H1 (cell line): ENCODE measurements at regions of chr22 and their contacts with region 1.

Region 1: DNA sequence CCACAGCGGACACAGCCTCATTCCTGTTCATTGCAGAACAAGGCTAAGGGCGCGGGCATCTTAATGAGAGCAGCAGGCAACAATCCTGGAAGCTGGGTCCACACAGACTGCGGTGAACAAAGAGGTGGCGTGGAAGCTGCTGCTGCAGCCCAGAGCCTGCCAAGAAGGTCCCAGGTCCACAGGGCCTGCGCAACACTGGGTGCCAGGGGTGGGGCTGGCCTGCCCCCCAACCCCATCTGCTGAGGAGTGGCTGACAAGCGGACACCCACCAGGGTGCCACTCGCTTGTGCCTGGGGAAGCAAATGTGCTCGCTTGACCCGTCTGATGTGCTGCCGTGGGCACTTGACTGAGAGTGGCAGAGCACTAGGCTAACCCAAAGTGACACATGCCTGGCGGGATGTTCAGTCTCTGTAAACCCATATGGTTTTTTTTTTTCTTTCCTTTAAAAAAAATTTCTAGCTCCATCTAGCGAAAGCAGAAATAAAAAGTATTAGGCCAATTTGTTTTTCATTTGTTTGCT is 83.2 kb upstream of the PITPNB start:
- DNase-seq: no peak
- H3K4me3 ChIP-seq: no peak overlapping the region
- H3K27ac ChIP-seq: no peak overlapping the region
- H3K4me1 ChIP-seq: no peaks in the 10 kb centered on the region
- H3K27me3 ChIP-seq: no peaks in the 10 kb centered on the region
- CTCF ChIP-seq: no peak
- EP300 ChIP-seq: no peak
- POLR2A ChIP-seq: no peak
- RAD21 ChIP-seq: no peak

Region 2: DNA sequence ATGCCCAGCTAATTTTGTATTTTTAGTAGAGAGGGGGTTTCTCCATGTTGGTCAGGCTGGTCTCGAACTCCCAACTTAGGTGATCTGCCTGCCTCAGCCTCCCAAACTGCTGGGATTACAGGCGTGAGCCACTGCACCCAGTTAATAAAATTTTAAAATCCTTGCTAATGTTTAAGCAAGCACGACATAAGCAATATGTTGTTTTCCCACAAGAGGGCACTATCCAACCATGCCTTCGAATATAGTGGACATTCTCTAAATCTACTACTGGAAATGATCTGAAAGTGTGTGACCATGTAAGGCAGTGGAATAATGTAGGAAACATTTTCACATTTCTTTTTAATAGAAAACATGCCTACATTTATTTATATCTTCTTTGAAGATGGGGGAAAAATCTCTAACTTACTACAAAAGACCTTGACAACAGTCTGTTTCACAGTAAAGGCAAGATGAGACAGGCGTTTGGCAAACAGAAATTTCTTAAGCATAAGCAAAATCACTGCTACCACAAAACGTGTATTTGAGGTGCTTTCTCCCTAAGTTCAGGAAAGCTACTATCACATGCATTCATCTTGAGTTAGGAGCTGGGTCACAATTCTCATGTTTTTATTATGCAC is 121.4 kb before region 1 on chr22:
- CTCF ChIA-PET with region 1: interaction called, 84 read pairs
- POLR2A ChIA-PET with region 1: interaction called, 3 read pairs
- DNase-seq: no peak
- H3K4me3 ChIP-seq: no peak overlapping the region
- H3K27ac ChIP-seq: no peak overlapping the region
- H3K4me1 ChIP-seq: peaks cover 7 to 12% (median 9%) of the 10 kb centered on the region in 4 experiments
- H3K27me3 ChIP-seq: no peaks in the 10 kb centered on the region
- CTCF ChIP-seq: peak in 2 of 3 experiments; percentile 51 to 71; a peak in 2 of 4 replicates
- EP300 ChIP-seq: no peak
- POLR2A ChIP-seq: no peak
- RAD21 ChIP-seq: peak; percentile 77 to 80

Region 3: DNA sequence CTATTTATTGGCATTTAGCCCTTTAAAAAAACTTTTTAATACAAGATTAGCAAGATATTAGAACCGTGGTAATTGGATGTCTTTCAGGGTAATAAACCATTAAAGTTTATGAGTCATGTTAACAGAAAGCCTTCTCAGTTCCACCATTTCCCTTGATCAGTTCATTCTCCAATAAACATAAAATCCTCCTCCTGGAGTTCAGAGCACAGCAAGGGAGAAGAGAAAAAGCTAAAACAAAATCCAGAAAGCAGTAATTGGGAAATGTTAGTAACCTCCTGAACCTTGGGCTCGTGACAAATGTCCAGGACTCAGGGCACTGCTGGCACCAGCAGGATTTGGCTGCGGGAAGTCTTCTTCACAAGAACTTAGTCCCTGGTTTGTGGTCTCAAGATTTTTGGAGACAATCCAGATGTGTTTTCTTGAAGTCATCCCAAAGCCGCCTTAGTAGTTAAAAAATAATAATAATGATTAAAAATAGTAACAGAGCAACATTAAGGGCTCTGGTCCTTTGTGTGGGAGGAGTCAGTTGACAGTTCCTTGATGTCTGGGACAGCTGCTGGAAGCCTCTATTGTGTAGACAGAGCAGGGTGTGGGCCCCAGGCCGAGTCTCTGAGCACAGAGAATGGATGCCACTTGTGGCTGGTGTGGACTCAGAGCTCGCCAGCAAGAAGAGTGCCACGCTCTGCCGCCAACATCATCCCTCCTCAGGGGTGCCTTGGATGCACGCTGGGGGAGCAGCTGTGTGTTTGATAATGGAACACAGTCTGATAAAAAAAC is 39.8 kb before region 1 on chr22:
- CTCF ChIA-PET with region 1: no interaction called
- POLR2A ChIA-PET with region 1: no interaction called
- DNase-seq: no peak
- H3K4me3 ChIP-seq: no peak overlapping the region
- H3K27ac ChIP-seq: no peak overlapping the region
- H3K4me1 ChIP-seq: peaks cover 0 to 4% (median 1%) of the 10 kb centered on the region in 4 experiments; a peak in 2 of 7 replicates
- H3K27me3 ChIP-seq: no peaks in the 10 kb centered on the region
- CTCF ChIP-seq: no peak
- EP300 ChIP-seq: no peak
- POLR2A ChIP-seq: no peak
- RAD21 ChIP-seq: no peak

Region 4: GRCh38 chr22:27980424-27981148 is 21.7 kb before region 1 on chr22:
- CTCF ChIA-PET with region 1: interaction called, 10 read pairs
- POLR2A ChIA-PET with region 1: interaction called, 4 read pairs
- DNase-seq: peak in 1 of 2 experiments; percentile 70
- H3K4me3 ChIP-seq: no peak overlapping the region
- H3K27ac ChIP-seq: no peak overlapping the region
- H3K4me1 ChIP-seq: peaks cover 0 to 6% (median 5%) of the 10 kb centered on the region in 4 experiments; a peak in 5 of 7 replicates
- H3K27me3 ChIP-seq: no peaks in the 10 kb centered on the region
- CTCF ChIP-seq: no peak
- EP300 ChIP-seq: no peak
- POLR2A ChIP-seq: no peak
- RAD21 ChIP-seq: no peak

Region 5: GRCh38 chr22:27990879-27991278 is 11.4 kb before region 1 on chr22:
- CTCF ChIA-PET with region 1: interaction called, 31 read pairs
- POLR2A ChIA-PET with region 1: interaction called, 4 read pairs
- DNase-seq: peak; percentile 61 to 83
- H3K4me3 ChIP-seq: no peak overlapping the region
- H3K27ac ChIP-seq: no peak overlapping the region
- H3K4me1 ChIP-seq: peaks cover 0 to 22% (median 18%) of the 10 kb centered on the region in 4 experiments; a peak in 6 of 7 replicates
- H3K27me3 ChIP-seq: peaks cover 0 to 2% (median 0%) of the 10 kb centered on the region in 4 experiments; a peak in 2 of 7 replicates
- CTCF ChIP-seq: peak; percentile 77 to 88 (median 87)
- EP300 ChIP-seq: 0 out of 3 replicates have a peak, but pooled peaks of 1 of the 2 experiments have one; percentile 51
- POLR2A ChIP-seq: no peak
- RAD21 ChIP-seq: peak; percentile 59 to 68

Region 6: DNA sequence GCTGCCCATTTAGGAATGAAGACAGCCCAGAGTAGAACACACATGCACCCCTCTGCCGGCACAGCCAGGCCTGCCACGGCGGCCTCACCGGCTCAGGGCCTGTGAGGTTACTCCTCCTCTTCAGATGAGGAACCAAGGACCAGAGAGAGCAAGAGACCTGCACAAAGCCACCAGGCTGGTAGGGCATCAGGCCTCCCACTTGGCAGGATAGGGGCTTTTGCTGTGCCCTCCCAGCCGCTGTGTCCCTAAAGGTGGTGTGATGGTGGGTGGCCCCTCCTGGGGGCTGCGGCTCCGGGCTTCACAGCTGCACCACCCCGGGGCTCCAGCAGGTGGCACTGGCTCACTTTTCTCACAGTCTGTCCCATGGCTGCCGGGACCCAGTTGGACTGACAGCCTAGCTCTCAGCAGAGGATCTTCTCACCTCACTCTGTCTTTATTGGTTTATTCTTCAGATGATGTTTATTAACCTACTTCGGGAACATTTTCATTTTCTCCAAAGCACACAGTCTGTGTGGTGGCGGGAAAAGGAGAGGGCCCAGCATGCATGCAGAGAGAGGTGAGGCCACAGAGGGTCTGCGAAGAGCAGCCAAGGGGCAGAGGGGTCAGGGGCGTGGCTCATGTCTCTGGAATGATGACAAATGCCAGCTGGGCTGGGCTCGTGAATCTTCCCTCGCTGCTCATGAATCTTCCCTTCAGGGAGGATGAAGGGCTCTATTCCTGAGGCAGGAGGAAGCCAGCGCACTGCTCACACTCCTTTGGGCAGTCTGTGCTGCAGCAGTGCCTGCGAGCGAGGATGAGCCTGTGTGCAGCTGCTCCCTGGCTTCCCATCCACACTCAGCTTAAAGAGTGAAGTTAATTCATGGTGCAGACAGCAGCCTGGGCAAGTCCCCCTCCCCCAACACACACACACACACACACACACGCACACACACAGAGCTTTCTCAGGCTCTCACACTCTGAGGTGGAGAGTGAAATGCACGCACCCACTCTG is 17.9 kb after region 1 on chr22:
- CTCF ChIA-PET with region 1: interaction called, 10 read pairs
- POLR2A ChIA-PET with region 1: no interaction called
- DNase-seq: peak; percentile 34 to 97
- H3K4me3 ChIP-seq: no peak overlapping the region
- H3K27ac ChIP-seq: no peak overlapping the region
- H3K4me1 ChIP-seq: peaks cover 0 to 6% (median under 1%) of the 10 kb centered on the region in 4 experiments; a peak in 3 of 7 replicates
- H3K27me3 ChIP-seq: no peaks in the 10 kb centered on the region
- CTCF ChIP-seq: peak; percentile 85 to 92 (median 88)
- EP300 ChIP-seq: no peak
- POLR2A ChIP-seq: no peak
- RAD21 ChIP-seq: peak; percentile 87 to 93